IMR-90 (cell line): ENCODE measurements at regions of chr3 and their contacts with region 1.

Region 1: GRCh38 chr3:71990545-71990944 is 205.6 kb upstream of the PROK2 start:
- DNase-seq: no peak
- ATAC-seq: no peak
- H3K4me3 ChIP-seq: no peak overlapping the region
- H3K27ac ChIP-seq: no peak overlapping the region
- H3K4me1 ChIP-seq: no peaks in the 10 kb centered on the region
- H3K27me3 ChIP-seq: no peaks in the 10 kb centered on the region
- CTCF ChIP-seq: no peak
- POLR2A ChIP-seq: no peak
- RAD21 ChIP-seq: no peak

Region 2: GRCh38 chr3:71859123-71859519 is 131.4 kb before region 1 on chr3:
- CTCF ChIA-PET with region 1: no interaction called
- POLR2A ChIA-PET with region 1: no interaction called
- dilution Hi-C with region 1: no loop called
- in situ Hi-C with region 1: no loop called
- intact Hi-C with region 1: no loop called
- DNase-seq: no peak
- ATAC-seq: no peak
- H3K4me3 ChIP-seq: no peak overlapping the region
- H3K27ac ChIP-seq: no peak overlapping the region
- H3K4me1 ChIP-seq: no peaks in the 10 kb centered on the region
- H3K27me3 ChIP-seq: peaks cover 3% of the 10 kb centered on the region; the same call in 1 of the 2 replicates
- CTCF ChIP-seq: 0 out of 2 replicates have a peak, but pooled peaks have one; percentile 11
- POLR2A ChIP-seq: no peak
- RAD21 ChIP-seq: no peak

Region 3: DNA sequence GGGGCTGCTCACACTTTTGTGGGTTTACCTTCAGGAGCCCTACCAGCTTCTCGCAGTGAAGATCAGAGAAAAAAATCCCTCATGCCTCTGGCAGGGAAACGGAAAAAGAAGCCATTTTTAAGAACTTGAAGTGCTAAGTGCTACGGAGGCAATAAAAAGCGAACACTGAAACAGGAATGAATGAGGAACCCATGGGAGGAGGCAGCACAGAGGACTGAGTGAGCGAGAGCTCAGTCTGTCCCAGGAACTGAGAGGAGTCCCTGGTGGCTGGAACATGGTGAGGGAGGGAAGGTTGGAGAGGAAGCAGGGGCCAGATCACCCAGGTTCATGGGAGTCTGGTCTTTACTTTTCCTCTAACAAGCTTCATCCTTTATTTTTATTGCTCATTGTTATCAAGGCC is 22.5 kb after region 1 on chr3:
- CTCF ChIA-PET with region 1: no interaction called
- POLR2A ChIA-PET with region 1: interaction called, 17 read pairs
- dilution Hi-C with region 1: no loop called
- in situ Hi-C with region 1: no loop called
- intact Hi-C with region 1: no loop called
- DNase-seq: no peak
- ATAC-seq: no peak
- H3K4me3 ChIP-seq: no peak overlapping the region
- H3K27ac ChIP-seq: no peak overlapping the region
- H3K4me1 ChIP-seq: no peaks in the 10 kb centered on the region
- H3K27me3 ChIP-seq: no peaks in the 10 kb centered on the region
- CTCF ChIP-seq: no peak
- POLR2A ChIP-seq: no peak
- RAD21 ChIP-seq: no peak

Region 4: DNA sequence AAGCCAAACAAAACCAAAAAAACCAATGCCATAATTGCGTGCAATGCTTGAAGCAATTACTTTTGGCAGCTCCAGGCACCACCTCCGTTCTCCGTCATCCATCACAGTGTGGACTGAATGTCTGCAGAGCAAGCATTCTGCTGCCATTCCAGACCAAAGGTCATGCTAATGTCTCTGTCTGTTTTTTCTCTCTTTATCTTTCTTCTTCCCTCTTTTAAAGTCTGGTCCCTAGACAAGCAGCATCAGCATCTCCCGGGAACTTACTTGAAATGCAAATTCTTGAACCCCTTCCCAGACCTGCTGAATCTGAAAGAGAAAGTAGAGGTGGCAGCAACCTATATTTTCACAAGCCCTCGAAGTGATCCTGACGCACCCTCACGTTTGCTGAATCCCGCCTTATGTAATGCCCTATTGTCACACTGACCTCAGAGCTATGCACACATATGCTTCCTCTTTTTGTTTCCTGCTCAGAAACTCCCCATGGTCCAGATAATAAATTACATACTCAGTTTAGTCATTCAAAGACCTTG is 91.7 kb after region 1 on chr3:
- CTCF ChIA-PET with region 1: no interaction called
- POLR2A ChIA-PET with region 1: no interaction called
- dilution Hi-C with region 1: no loop called
- in situ Hi-C with region 1: no loop called
- intact Hi-C with region 1: no loop called
- DNase-seq: no peak
- ATAC-seq: no peak
- H3K4me3 ChIP-seq: no peak overlapping the region
- H3K27ac ChIP-seq: no peak overlapping the region
- H3K4me1 ChIP-seq: no peaks in the 10 kb centered on the region
- H3K27me3 ChIP-seq: peaks cover 7% of the 10 kb centered on the region
- CTCF ChIP-seq: no peak
- POLR2A ChIP-seq: no peak
- RAD21 ChIP-seq: no peak

Region 5: GRCh38 chr3:72127844-72128243 is 137.3 kb after region 1 on chr3:
- CTCF ChIA-PET with region 1: no interaction called
- POLR2A ChIA-PET with region 1: no interaction called
- dilution Hi-C with region 1: no loop called
- in situ Hi-C with region 1: no loop called
- intact Hi-C with region 1: no loop called
- DNase-seq: peak; percentile 25
- ATAC-seq: no peak
- H3K4me3 ChIP-seq: no peak overlapping the region
- H3K27ac ChIP-seq: no peak overlapping the region
- H3K4me1 ChIP-seq: peaks cover 1% of the 10 kb centered on the region; the same call in 1 of the 2 replicates
- H3K27me3 ChIP-seq: peaks cover 7% of the 10 kb centered on the region
- CTCF ChIP-seq: no peak
- POLR2A ChIP-seq: no peak
- RAD21 ChIP-seq: no peak